ENCODE measurements at regions of chr5 and their contacts with region 1.

Region 1: GRCh38 chr5:150000256-150000989 is at the starts of genes HMGXB3 and TIGD6:
- DNase-seq: peak; percentile 92
- H3K4me3 Mint-ChIP-seq: peak within 1 kb of the TSS; percentile 82
- H3K27ac Mint-ChIP-seq: peak within 1 kb of the TSS; percentile 95
- H3K4me1 Mint-ChIP-seq: peaks cover 43% of the 10 kb centered on the region
- H3K27me3 Mint-ChIP-seq: no peaks in the 10 kb centered on the region
- CTCF ChIP-seq: no peak
- total RNA-seq, gene HMGXB3: 66.8 and 67.8 TPM in 2 replicates
- total RNA-seq, gene TIGD6: 9.0 and 10.6 TPM in 2 replicates

Region 2: DNA sequence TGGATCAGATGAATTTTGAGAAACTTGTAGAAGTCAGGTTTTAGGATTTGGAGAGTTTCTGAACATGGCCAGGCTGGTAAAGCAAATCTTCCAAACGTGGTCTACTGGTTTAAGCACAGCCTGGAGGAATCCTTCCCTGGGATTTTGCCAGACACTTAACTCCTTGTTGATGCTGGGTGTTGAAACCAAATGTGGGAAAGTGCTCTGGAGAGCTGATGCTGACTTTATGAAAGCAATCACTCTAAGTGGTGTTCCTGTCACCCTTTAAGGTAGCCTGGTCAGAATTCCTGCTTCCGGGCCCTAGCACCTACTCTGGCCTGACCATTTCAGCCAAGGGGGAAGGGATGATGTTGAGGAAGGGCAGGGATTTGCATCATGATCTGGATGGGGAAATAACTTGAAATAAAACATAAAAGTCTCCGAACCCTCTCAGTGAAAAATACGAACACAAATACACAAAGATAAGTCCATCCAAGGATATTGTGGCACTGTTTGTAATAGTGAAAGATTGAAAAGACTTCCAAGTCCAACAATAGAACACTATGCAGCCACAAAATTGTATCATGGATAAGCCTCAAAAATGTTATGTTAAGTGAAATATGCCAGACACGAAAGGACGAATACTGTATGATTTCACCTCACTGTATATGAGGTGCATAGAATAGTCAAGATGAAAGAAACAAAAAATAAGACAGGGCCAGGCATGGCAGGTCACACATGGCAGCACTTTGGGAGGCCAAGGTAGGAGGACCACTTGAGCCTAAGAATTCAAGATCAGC is 113.5 kb before region 1 on chr5:
- CTCF ChIA-PET with region 1: no interaction called
- POLR2A ChIA-PET with region 1: no interaction called
- intact Hi-C with region 1: no loop called
- DNase-seq: peak; percentile 81
- H3K4me3 Mint-ChIP-seq: no peak overlapping the region
- H3K27ac Mint-ChIP-seq: peak overlapping the region; percentile 30
- H3K4me1 Mint-ChIP-seq: peaks cover 29% of the 10 kb centered on the region
- H3K27me3 Mint-ChIP-seq: no peaks in the 10 kb centered on the region
- CTCF ChIP-seq: no peak

Region 3: DNA sequence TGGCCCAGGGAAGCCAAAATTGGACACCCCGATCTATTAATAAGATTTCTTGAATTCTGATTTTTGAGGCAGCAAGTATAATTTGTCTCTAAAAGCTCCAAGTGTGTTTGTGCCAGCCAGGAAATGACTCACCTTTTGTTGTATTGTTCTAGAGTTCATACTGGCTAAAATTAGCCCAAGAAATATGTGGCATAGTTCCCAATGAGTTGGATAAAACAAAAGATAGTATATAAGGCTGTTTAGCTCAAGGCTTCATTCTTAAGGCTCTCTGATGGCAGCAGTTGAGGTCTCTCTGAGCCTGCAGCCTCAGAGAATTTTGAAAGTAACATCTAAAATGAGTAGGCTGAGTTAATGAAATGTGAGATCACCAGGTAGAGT is 21.7 kb after region 1 on chr5:
- CTCF ChIA-PET with region 1: interaction called, 11 read pairs
- POLR2A ChIA-PET with region 1: interaction called, 104 read pairs
- intact Hi-C with region 1: loop called (anchors 1 kb)
- DNase-seq: peak; percentile 98
- H3K4me3 Mint-ChIP-seq: peak overlapping the region; percentile 63
- H3K27ac Mint-ChIP-seq: peak overlapping the region; percentile 89
- H3K4me1 Mint-ChIP-seq: peaks cover 48% of the 10 kb centered on the region
- H3K27me3 Mint-ChIP-seq: no peaks in the 10 kb centered on the region
- CTCF ChIP-seq: no peak

Region 4: GRCh38 chr5:150052956-150053712 is 52.7 kb after region 1 on chr5:
- CTCF ChIA-PET with region 1: no interaction called
- POLR2A ChIA-PET with region 1: interaction called, 5 read pairs
- intact Hi-C with region 1: loop called (anchors 1 kb)
- DNase-seq: peak; percentile 74
- H3K4me3 Mint-ChIP-seq: no peak overlapping the region
- H3K27ac Mint-ChIP-seq: peak overlapping the region; percentile 41
- H3K4me1 Mint-ChIP-seq: peaks cover 46% of the 10 kb centered on the region
- H3K27me3 Mint-ChIP-seq: no peaks in the 10 kb centered on the region
- CTCF ChIP-seq: no peak

Region 5: GRCh38 chr5:150075871-150076288 is 75.5 kb after region 1 on chr5:
- CTCF ChIA-PET with region 1: no interaction called
- POLR2A ChIA-PET with region 1: no interaction called
- intact Hi-C with region 1: no loop called
- DNase-seq: no peak
- H3K4me3 Mint-ChIP-seq: no peak overlapping the region
- H3K27ac Mint-ChIP-seq: no peak overlapping the region
- H3K4me1 Mint-ChIP-seq: no peaks in the 10 kb centered on the region
- H3K27me3 Mint-ChIP-seq: no peaks in the 10 kb centered on the region
- CTCF ChIP-seq: no peak

Region 6: GRCh38 chr5:150122158-150122510 is 121.7 kb after region 1 on chr5:
- CTCF ChIA-PET with region 1: interaction called, 3 read pairs
- POLR2A ChIA-PET with region 1: interaction called, 3 read pairs
- intact Hi-C with region 1: loop called (anchors 1 kb)
- DNase-seq: peak; percentile 63
- H3K4me3 Mint-ChIP-seq: no peak overlapping the region
- H3K27ac Mint-ChIP-seq: peak overlapping the region; percentile 2
- H3K4me1 Mint-ChIP-seq: peaks cover 9% of the 10 kb centered on the region
- H3K27me3 Mint-ChIP-seq: no peaks in the 10 kb centered on the region
- CTCF ChIP-seq: peak; percentile 62

Region 7: DNA sequence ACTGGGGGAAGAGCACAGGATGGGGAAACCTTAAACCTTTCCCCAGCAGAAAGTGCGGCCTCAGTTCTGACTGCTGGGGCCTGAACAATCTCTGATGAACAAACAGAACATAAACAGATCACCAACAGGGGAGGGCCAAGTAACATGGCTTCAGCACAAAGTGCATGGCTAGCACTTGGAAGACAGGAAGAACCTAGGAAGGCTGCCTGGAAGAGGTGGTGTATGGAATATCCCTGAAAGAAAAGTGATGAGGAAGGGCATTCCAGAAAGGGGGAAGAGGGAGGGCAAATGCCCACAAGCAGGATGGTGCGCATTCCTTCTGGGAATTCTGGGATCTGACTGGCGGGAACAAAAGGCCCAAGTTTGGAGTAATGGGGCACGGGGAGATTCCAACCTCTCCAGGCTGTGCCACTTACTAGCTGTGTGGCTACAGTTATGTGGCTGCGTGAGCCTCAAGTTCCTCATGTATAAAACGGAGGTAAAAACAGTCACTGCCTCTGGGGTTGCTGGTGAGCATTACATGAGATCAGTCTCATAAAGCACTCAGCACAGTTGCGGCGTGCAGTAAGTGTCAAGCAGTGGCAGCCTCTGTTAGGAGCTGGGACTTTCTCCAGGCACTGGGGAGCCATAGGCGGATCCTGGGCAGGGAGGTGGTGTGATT is 153.7 kb after region 1 on chr5:
- CTCF ChIA-PET with region 1: no interaction called
- POLR2A ChIA-PET with region 1: no interaction called
- intact Hi-C with region 1: no loop called
- DNase-seq: no peak
- H3K4me3 Mint-ChIP-seq: no peak overlapping the region
- H3K27ac Mint-ChIP-seq: no peak overlapping the region
- H3K4me1 Mint-ChIP-seq: peaks cover 6% of the 10 kb centered on the region
- H3K27me3 Mint-ChIP-seq: no peaks in the 10 kb centered on the region
- CTCF ChIP-seq: no peak

Region 8: GRCh38 chr5:150436141-150436680 is 435.8 kb after region 1 on chr5:
- CTCF ChIA-PET with region 1: no interaction called
- POLR2A ChIA-PET with region 1: interaction called, 4 read pairs
- intact Hi-C with region 1: loop called (anchors 10 kb)
- DNase-seq: peak; percentile 89
- H3K4me3 Mint-ChIP-seq: no peak overlapping the region
- H3K27ac Mint-ChIP-seq: no peak overlapping the region
- H3K4me1 Mint-ChIP-seq: peaks cover 14% of the 10 kb centered on the region
- H3K27me3 Mint-ChIP-seq: no peaks in the 10 kb centered on the region
- CTCF ChIP-seq: peak; percentile 94

Measured in MCF 10A (cell line).